HCT116 (cell line): ENCODE measurements at regions of chr11 and their contacts with region 1.

Region 1: DNA sequence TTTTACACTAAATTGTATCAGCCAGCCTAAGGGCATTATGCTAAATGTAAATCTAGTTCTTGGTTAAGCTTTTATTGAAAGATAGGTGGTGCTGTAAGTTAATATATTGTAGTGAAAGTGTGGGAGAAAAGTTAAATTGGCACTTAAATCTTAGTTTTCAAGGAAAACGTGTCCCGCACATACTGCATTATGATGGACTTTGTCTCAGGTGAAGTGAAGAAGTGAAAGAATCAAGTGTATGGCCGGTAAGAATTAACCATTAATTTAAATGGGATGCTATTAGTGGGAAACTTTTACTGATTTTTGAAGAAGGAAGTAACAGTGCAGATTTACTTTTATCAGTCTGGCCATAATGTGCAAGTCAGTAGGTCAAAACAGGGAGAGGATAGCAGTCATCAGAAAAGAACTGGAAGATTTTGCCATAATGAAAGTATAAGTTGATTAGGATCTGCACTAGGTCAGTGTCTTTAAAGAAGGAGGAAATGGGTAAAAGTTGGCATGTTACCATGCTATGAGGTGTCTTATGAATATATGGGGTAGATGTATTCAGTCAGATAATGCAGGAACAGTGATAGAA is 81.6 kb downstream of the PDHX start:
- DNase-seq: no peak
- ATAC-seq: peak; percentile 40; the same call in 1 of the 2 replicates
- H3K4me3 ChIP-seq: no peak overlapping the region
- H3K27ac ChIP-seq: no peak overlapping the region
- H3K4me1 ChIP-seq: peaks cover under 1 to 6% of the 10 kb centered on the region in 2 experiments; a peak in 3 of 4 replicates
- H3K27me3 ChIP-seq: no peaks in the 10 kb centered on the region
- CTCF ChIP-seq: peak; percentile 17 to 75 (median 61); a peak in 4 of 6 replicates
- POLR2A ChIP-seq: no peak
- RAD21 ChIP-seq: peak; percentile 89

Region 2: GRCh38 chr11:35223371-35223796 is 225.3 kb after region 1 on chr11:
- CTCF ChIA-PET with region 1: no interaction called
- POLR2A ChIA-PET with region 1: no interaction called
- RAD21 ChIA-PET with region 1: no interaction called
- intact Hi-C with region 1: loop called (anchors 5 kb)
- DNase-seq: no peak
- ATAC-seq: no peak
- H3K4me3 ChIP-seq: no peak overlapping the region
- H3K27ac ChIP-seq: no peak overlapping the region
- H3K4me1 ChIP-seq: no peaks in the 10 kb centered on the region
- H3K27me3 ChIP-seq: no peaks in the 10 kb centered on the region
- CTCF ChIP-seq: no peak
- POLR2A ChIP-seq: no peak
- RAD21 ChIP-seq: no peak

Region 3: GRCh38 chr11:35237860-35238715 is 240.0 kb after region 1 on chr11:
- CTCF ChIA-PET with region 1: interaction called, 4 read pairs
- POLR2A ChIA-PET with region 1: no interaction called
- RAD21 ChIA-PET with region 1: interaction called in 1 of 2 experiments, 3 read pairs
- intact Hi-C with region 1: loop called (anchors 2 kb)
- DNase-seq: peak; percentile 80
- ATAC-seq: peak; percentile 75
- H3K4me3 ChIP-seq: 0 out of 4 replicates have a peak overlapping the region, but pooled peaks of 1 of the 2 experiments have one; percentile 2
- H3K27ac ChIP-seq: no peak overlapping the region
- H3K4me1 ChIP-seq: peaks cover 26 to 39% of the 10 kb centered on the region in 2 experiments
- H3K27me3 ChIP-seq: no peaks in the 10 kb centered on the region
- CTCF ChIP-seq: peak; percentile 61 to 96 (median 85); a peak in 5 of 6 replicates
- POLR2A ChIP-seq: no peak
- RAD21 ChIP-seq: peak; percentile 87